Thyroid gland (tissue), 4 donors: ENCODE measurements at regions of chr17 and their contacts with region 1.

Region 1: GRCh38 chr17:57478484-57479250 is 222.3 kb downstream of the MSI2 start:
- DNase-seq: no peak
- H3K4me3 ChIP-seq: no peak overlapping the region
- H3K27ac ChIP-seq: peak overlapping the region; percentile 34 to 54 (median 36)
- H3K4me1 ChIP-seq: peaks cover 36 to 72% of the 10 kb centered on the region in 2 donors
- H3K27me3 ChIP-seq: no peaks in the 10 kb centered on the region
- CTCF ChIP-seq: no peak
- POLR2A ChIP-seq: no peak

Region 2: DNA sequence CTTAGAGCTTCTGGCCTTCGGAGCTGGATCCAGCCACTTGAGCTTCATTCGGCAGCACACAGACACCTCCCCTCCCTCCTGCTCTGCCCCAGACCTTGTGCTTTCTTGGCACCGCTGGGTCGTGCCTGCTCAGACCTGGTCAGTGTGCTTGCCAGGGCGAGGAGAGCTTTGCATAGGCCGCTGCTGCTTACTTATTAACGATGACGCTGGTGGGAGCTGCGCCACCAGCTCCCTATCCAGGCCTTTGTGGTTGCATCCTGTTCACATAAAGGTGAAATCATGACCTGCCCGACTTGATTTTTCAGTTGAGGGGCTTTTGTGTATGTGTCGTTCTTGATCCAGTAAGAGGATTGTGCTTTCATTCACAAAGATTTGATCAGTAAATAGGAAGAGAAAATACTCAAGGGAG is 121.3 kb before region 1 on chr17:
- intact Hi-C with region 1: loop called (anchors 10 kb)
- DNase-seq: peak; percentile 94 to 95
- H3K4me3 ChIP-seq: no peak overlapping the region
- H3K27ac ChIP-seq: peak overlapping the region; percentile 90 to 98 (median 95)
- H3K4me1 ChIP-seq: peaks cover 41 to 62% of the 10 kb centered on the region in 2 donors
- H3K27me3 ChIP-seq: no peaks in the 10 kb centered on the region
- CTCF ChIP-seq: no peak
- POLR2A ChIP-seq: peak in 1 of 2 donors; percentile 80

Region 3: DNA sequence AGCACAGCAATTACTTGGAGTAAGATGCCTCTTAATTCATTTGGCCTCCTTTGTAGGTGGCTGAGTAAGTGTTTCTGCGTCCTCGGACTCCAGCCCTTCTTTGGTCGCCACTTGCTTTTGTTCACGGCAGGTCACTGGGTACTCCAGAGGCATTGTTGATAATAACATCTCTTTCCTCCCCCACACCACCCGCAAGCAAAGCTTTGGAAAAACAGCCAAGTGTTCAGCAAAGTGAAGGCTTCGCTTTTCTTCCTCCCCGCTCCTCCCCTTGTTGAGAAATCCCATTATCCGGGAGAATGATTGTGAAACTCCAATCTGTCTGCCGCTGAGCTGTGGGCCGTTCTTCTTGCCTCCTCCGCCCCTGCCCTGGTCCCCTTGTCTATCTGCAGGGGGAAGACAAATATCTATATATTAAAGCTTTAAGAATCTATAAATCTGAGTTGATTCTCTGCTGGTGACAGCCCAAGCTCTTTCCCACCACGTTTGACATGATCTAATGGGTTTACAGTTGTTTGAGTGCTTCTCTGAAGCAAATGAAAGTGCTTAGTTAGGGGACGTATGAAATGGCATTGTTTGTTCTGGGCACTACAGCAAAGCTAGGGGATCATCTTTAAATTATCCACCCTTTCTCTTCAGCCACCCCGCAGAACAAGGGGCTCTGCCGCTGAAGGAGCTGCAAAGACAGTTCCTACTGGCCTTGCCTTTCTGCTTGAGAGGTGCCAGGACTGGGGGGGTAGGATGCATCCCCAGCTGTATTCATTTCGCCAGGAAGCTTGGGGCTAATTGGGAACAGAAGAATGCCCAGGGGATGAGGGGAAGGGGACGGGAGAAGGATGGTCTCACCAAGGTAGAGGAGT is 99.3 kb after region 1 on chr17:
- intact Hi-C with region 1: no loop called
- DNase-seq: peak; percentile 76 to 83
- H3K4me3 ChIP-seq: no peak overlapping the region
- H3K27ac ChIP-seq: peak overlapping the region; percentile 55 to 70 (median 60)
- H3K4me1 ChIP-seq: peaks cover 7 to 19% of the 10 kb centered on the region in 2 donors
- H3K27me3 ChIP-seq: no peaks in the 10 kb centered on the region
- CTCF ChIP-seq: no peak
- POLR2A ChIP-seq: peak in 1 of 2 donors; percentile 14